ENCODE measurements at regions of chr4 and their contacts with region 1.

Region 1: DNA sequence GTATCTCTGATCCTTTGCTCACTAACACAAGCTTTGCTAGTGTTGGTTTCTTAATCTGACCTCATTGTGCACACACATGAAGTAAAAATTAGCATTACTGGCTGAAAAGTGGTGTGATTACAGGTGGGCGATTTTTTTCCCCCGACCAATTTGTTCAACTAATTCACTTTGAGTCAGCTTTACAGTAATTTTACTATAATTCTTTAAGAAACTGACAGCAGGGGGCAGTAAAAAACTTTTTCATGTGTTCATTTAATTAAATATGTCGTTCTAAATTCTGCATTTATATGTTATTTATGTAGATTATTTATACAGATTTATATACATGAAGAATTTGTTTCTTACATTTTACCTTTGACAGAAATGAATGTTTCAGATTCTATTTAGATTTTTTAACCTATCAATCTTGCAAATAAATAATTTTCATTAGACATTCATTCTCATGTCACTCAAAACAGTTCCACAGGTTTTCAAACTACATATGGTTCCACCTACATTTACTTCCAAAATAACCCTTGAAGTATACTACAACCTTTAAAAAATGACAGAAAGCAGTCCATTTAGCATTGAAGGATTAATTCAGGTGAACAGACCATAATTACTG is 17.5 kb downstream of the PALLD start:
- DNase-seq: peak; percentile 50
- ATAC-seq: no peak
- H3K4me3 ChIP-seq: no peak overlapping the region
- H3K27ac ChIP-seq: no peak overlapping the region
- H3K4me1 ChIP-seq: peaks cover 5% of the 10 kb centered on the region
- H3K27me3 ChIP-seq: no peaks in the 10 kb centered on the region
- CTCF ChIP-seq: peak; percentile 54
- POLR2A ChIP-seq: no peak
- RAD21 ChIP-seq: peak; percentile 60

Region 2: DNA sequence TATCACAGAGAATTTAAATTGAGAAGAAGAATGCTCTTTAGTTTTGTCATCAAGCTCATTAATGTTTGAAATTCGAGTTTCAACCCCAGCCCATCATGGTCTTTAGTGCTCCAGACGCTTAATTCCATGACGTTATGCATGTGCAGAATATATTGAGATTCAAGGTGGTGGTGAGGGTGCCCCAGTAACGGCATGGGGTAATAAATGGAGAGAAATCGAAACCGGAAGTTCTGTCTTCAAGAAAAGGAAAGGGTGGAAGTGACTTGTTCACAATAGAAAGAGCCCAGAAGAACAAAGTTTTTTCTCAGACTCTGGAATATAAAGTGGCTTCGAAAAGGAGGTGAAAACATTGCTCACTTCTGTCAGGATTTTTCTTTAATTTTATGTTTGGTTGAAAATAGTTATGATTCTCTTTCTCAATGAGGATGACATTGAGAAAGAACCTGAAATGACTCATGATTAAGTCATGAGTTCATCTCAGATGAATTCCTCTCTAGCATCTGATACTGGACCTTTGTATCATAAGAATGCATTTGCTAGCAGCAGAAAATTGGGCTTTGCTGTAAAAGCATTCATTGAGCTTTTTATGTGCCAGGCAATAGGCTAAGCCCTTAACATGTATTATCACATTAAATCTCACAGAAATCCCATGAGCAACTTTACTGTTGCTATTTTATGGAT is 33.3 kb before region 1 on chr4:
- CTCF ChIA-PET with region 1: no interaction called
- POLR2A ChIA-PET with region 1: no interaction called
- dilution Hi-C with region 1: no loop called
- in situ Hi-C with region 1: no loop called
- intact Hi-C with region 1: loop called (anchors 1 kb)
- DNase-seq: peak; percentile 85
- ATAC-seq: peak; percentile 21; the same call in 1 of the 2 replicates
- H3K4me3 ChIP-seq: peak overlapping the region; percentile 62
- H3K27ac ChIP-seq: peak overlapping the region; percentile 80
- H3K4me1 ChIP-seq: peaks cover 10% of the 10 kb centered on the region
- H3K27me3 ChIP-seq: no peaks in the 10 kb centered on the region
- CTCF ChIP-seq: no peak
- POLR2A ChIP-seq: no peak
- RAD21 ChIP-seq: no peak

Region 3: GRCh38 chr4:168631241-168632162 is 117.2 kb after region 1 on chr4:
- CTCF ChIA-PET with region 1: interaction called, 5 read pairs
- POLR2A ChIA-PET with region 1: no interaction called
- dilution Hi-C with region 1: no loop called
- in situ Hi-C with region 1: no loop called
- intact Hi-C with region 1: loop called (anchors 2 kb)
- DNase-seq: peak; percentile 55
- ATAC-seq: peak; percentile 78
- H3K4me3 ChIP-seq: peak overlapping the region; percentile 54
- H3K27ac ChIP-seq: peak overlapping the region; percentile 59
- H3K4me1 ChIP-seq: peaks cover 18% of the 10 kb centered on the region
- H3K27me3 ChIP-seq: no peaks in the 10 kb centered on the region
- CTCF ChIP-seq: peak; percentile 45
- POLR2A ChIP-seq: no peak
- RAD21 ChIP-seq: peak; percentile 50

Region 4: GRCh38 chr4:168847771-168848511 is 333.6 kb after region 1 on chr4:
- CTCF ChIA-PET with region 1: no interaction called
- POLR2A ChIA-PET with region 1: no interaction called
- dilution Hi-C with region 1: no loop called
- in situ Hi-C with region 1: no loop called
- intact Hi-C with region 1: loop called (anchors 10 kb)
- DNase-seq: no peak
- ATAC-seq: peak; percentile 28
- H3K4me3 ChIP-seq: peak overlapping the region; percentile 24; the same call in 1 of the 2 replicates
- H3K27ac ChIP-seq: peak overlapping the region; percentile 69
- H3K4me1 ChIP-seq: peaks cover 25% of the 10 kb centered on the region
- H3K27me3 ChIP-seq: no peaks in the 10 kb centered on the region
- CTCF ChIP-seq: no peak
- POLR2A ChIP-seq: no peak
- RAD21 ChIP-seq: no peak

Region 5: DNA sequence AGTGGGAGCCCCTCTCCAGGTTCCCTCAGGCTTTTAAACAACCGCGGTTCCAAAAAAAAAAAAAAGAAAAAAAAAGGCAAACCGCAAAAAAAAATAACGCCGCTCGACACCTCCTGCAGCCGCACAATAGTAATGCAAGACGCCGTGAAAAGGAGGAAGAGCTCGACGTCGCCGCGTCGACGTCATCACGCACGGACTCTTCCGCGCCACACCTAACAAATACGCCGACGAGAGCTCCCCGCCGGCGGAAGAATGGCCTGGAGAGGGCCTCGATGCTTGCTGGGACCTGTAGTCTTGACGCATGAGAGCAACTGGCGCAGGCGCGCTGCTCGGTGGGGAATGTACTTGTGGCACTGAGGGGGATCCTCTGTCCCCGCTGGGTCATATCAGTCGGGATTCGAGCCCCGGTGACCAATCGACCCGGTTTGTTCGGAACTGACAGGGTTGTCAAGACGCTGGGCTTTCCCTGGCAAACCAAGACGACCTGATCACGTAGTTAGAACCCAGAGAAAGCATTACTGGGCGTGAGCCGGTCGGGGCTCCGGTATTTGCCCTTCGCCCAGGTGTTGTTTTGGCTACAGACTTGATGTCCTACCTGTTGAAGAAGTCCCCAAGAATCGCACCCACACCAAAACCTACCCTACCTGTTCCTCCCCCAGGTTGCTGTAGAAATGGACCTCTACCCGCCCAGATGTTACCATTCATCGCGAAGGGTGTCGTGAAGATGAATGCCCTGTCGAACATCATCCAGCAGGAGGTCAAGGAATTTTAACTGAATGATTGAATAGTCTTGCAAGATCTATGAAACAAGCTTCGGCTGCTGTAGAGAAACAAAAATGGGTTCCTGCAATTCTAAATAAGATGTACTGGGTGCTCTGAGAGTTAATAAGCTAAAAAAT is 496.0 kb after region 1 on chr4 and contains the start of gene CBR4:
- CTCF ChIA-PET with region 1: no interaction called
- POLR2A ChIA-PET with region 1: no interaction called
- dilution Hi-C with region 1: no loop called
- in situ Hi-C with region 1: loop called (anchors 10 kb)
- intact Hi-C with region 1: no loop called
- DNase-seq: peak; percentile 99
- ATAC-seq: peak; percentile 98
- H3K4me3 ChIP-seq: peak within 1 kb of the TSS; percentile 78
- H3K27ac ChIP-seq: peak within 1 kb of the TSS; percentile 87
- H3K4me1 ChIP-seq: peaks cover 4% of the 10 kb centered on the region
- H3K27me3 ChIP-seq: no peaks in the 10 kb centered on the region
- CTCF ChIP-seq: peak; percentile 40
- POLR2A ChIP-seq: peak; percentile 86
- RAD21 ChIP-seq: peak; percentile 28
- total RNA-seq, gene CBR4: 4.5 and 9.2 TPM in 2 replicates

Measured in IMR-90 (cell line).